ENCODE measurements at regions of chr20 and their contacts with region 1.

Region 1: DNA sequence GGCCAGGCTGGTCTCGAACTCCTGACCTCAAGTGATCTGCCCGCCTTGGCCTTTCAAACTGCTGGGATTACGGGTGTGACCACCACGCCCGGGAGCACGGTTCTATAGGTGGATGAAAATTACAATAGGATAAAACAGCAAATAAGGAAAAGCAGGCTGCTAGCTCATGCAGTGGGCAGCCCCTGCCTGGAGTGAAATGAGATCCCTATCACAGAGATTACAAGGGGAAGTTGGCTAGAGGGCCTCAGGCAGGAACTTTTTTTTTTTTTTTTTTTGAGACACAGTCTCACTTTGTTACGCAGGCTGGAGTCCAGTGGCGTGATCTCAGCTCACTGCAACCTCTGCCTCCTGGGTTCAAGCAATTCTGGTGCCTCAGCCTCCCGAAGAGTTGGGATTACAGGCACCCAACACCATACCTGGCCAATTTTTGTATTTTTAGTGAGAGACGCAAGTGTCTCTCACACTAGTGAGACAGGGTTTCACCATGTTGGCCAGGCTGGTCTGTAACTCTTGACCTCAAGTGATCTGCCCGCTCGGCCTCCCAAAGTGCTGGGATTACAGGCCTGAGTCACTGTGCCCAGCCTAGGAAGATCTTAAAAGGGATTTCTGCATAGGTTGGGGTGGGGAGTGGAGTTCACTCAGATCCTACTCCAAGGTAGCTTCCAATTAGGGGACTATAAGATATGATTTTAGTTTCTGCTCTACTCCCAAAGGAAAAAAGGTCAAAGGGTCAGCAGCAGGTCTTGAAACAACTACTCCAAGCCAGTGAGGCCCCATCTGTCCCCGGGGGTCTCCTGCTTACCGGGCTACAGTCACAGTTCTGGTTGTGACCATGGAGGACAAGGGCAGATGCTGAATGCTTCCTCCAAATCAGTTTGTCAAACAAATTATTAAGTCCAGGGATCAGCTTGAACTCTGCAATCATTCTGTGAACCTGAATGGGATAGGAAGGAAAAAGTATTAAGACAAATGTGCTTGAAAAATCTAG is 59.8 kb downstream of the MYH7B start:
- DNase-seq: no peak
- H3K4me3 ChIP-seq: no peak overlapping the region
- H3K27ac ChIP-seq: no peak overlapping the region
- H3K4me1 ChIP-seq: no peaks in the 10 kb centered on the region
- H3K27me3 ChIP-seq: no peaks in the 10 kb centered on the region
- CTCF ChIP-seq: no peak

Region 2: GRCh38 chr20:34720266-34720665 is 295.2 kb before region 1 on chr20:
- CTCF ChIA-PET with region 1: no interaction called
- dilution Hi-C with region 1: no loop called
- in situ Hi-C with region 1: no loop called
- intact Hi-C with region 1: no loop called
- DNase-seq: no peak
- H3K4me3 ChIP-seq: no peak overlapping the region
- H3K27ac ChIP-seq: no peak overlapping the region
- H3K4me1 ChIP-seq: no peaks in the 10 kb centered on the region
- H3K27me3 ChIP-seq: no peaks in the 10 kb centered on the region
- CTCF ChIP-seq: no peak

Region 3: GRCh38 chr20:34861386-34862084 is 154.0 kb before region 1 on chr20:
- CTCF ChIA-PET with region 1: no interaction called
- dilution Hi-C with region 1: loop called (anchors 5 kb)
- in situ Hi-C with region 1: no loop called
- intact Hi-C with region 1: no loop called
- DNase-seq: no peak
- H3K4me3 ChIP-seq: no peak overlapping the region
- H3K27ac ChIP-seq: no peak overlapping the region
- H3K4me1 ChIP-seq: no peaks in the 10 kb centered on the region
- H3K27me3 ChIP-seq: no peaks in the 10 kb centered on the region
- CTCF ChIP-seq: no peak

Region 4: DNA sequence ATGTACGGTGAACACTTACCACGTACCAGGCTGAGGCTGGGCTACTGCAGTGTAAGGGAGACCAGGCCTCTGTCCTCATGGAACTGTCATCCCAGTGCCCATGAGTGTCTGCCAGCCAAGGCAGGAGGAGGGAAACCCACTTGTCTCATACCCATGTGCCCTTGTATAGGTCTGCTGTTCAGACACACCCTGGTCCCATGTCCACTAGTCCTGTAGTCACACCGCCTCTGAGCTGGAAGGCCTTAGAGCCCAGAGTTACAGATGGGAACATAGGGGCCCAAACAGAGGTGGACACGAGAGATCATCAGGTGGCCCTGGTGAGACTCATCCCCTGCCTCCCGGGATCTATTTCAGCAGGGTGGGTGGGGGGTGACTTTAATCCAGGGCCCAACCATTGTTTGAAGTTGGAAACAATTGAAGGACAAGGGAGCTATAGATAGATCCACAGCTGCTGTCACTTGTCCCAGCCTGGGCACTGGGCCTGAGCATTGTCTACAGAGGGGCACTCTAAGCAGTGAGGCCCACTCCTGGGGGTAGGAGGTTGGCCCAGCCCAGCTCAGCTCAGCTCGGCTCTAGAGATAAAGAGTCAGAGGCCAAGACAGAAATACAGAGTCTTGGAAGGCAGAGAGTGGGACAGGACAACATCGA is 45.2 kb before region 1 on chr20:
- CTCF ChIA-PET with region 1: no interaction called
- dilution Hi-C with region 1: loop called (anchors 5 kb)
- in situ Hi-C with region 1: no loop called
- intact Hi-C with region 1: no loop called
- DNase-seq: no peak
- H3K4me3 ChIP-seq: no peak overlapping the region
- H3K27ac ChIP-seq: no peak overlapping the region
- H3K4me1 ChIP-seq: no peaks in the 10 kb centered on the region
- H3K27me3 ChIP-seq: no peaks in the 10 kb centered on the region
- CTCF ChIP-seq: no peak

Measured in mammary epithelial cell (primary cell).